ENCODE measurements at regions of chr2 and their contacts with region 1.

Region 1: GRCh38 chr2:237486819-237487444 is at the start of gene MLPH:
- DNase-seq: no peak
- ATAC-seq: peak; percentile 83
- H3K4me3 ChIP-seq: peak within 1 kb of the TSS; percentile 74 to 85
- H3K27ac ChIP-seq: peak within 1 kb of the TSS; percentile 76
- H3K4me1 ChIP-seq: peaks cover 35 to 80% of the 10 kb centered on the region in 2 experiments
- H3K27me3 ChIP-seq: no peaks in the 10 kb centered on the region
- CTCF ChIP-seq: no peak
- POLR2A ChIP-seq: no peak
- RAD21 ChIP-seq: no peak
- total RNA-seq, gene MLPH: 81.4 TPM

Region 2: GRCh38 chr2:237474931-237475703 is 11.8 kb before region 1 on chr2:
- CTCF ChIA-PET with region 1: interaction called, 15 read pairs
- POLR2A ChIA-PET with region 1: interaction called, 3 read pairs
- RAD21 ChIA-PET with region 1: no interaction called
- intact Hi-C with region 1: no loop called
- DNase-seq: peak; percentile 37
- ATAC-seq: peak; percentile 85
- H3K4me3 ChIP-seq: peak overlapping the region; percentile 63 to 70
- H3K27ac ChIP-seq: peak overlapping the region; percentile 75
- H3K4me1 ChIP-seq: peaks cover 3 to 24% of the 10 kb centered on the region in 2 experiments; a peak in 3 of 4 replicates
- H3K27me3 ChIP-seq: no peaks in the 10 kb centered on the region
- CTCF ChIP-seq: peak; percentile 59 to 75 (median 71)
- POLR2A ChIP-seq: no peak
- RAD21 ChIP-seq: peak; percentile 64

Region 3: GRCh38 chr2:237500681-237501424 is 13.9 kb after region 1 on chr2:
- CTCF ChIA-PET with region 1: no interaction called
- POLR2A ChIA-PET with region 1: interaction called, 11 read pairs
- RAD21 ChIA-PET with region 1: no interaction called
- intact Hi-C with region 1: loop called (anchors 1 kb)
- DNase-seq: peak; percentile 94
- ATAC-seq: peak; percentile 87
- H3K4me3 ChIP-seq: peak overlapping the region; percentile 1 to 38; a peak in 3 of 4 replicates
- H3K27ac ChIP-seq: peak overlapping the region; percentile 88
- H3K4me1 ChIP-seq: peaks cover 38 to 87% of the 10 kb centered on the region in 2 experiments
- H3K27me3 ChIP-seq: no peaks in the 10 kb centered on the region
- CTCF ChIP-seq: no peak
- POLR2A ChIP-seq: no peak
- RAD21 ChIP-seq: peak; percentile 23; the same call in 1 of the 2 replicates